Activated CD4-positive, alpha-beta T cell treated with anti-CD3 and anti-CD28 coated beads for 36 hours (primary cell): ENCODE measurements at regions of chr3 and their contacts with region 1.

Region 1: DNA sequence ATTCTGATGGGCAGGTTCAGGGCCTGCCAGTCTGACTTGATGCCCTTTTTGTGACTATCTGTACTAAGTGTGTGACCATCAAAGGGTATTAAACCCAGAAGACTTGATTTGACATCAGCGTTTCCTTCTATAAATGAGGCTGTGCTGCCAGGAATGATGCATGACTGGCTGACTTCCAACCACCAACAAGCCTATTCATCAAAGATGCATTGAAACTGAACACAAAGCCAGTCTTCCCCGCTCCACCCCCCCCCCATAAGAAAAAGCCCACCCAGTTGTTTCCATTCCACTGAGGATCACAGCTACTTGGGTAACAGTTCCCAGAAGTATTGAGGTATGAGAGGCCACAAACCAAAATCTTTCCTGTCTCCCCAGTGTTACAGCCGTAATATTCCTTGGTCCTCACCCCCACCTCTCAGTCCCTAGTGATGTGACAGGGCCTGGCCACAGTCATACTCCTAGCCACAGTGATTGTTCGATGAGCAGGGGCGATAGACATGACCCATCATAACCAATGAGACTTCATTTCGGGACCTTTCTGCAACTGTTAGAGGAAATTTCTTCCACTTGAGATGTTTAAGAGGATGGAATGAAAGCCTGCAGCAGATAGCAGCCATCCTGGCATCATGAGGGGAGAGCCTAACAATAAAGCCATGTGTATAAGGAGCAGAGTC is 22.6 kb downstream of the SH3BP5 start:
- DNase-seq: peak; percentile 72
- ATAC-seq: peak; percentile 51
- H3K4me3 Mint-ChIP-seq: peak overlapping the region; percentile 49
- H3K27ac Mint-ChIP-seq: peak overlapping the region; percentile 95
- H3K4me1 Mint-ChIP-seq: peaks cover 66% of the 10 kb centered on the region
- H3K27me3 Mint-ChIP-seq: no peaks in the 10 kb centered on the region

Region 2: DNA sequence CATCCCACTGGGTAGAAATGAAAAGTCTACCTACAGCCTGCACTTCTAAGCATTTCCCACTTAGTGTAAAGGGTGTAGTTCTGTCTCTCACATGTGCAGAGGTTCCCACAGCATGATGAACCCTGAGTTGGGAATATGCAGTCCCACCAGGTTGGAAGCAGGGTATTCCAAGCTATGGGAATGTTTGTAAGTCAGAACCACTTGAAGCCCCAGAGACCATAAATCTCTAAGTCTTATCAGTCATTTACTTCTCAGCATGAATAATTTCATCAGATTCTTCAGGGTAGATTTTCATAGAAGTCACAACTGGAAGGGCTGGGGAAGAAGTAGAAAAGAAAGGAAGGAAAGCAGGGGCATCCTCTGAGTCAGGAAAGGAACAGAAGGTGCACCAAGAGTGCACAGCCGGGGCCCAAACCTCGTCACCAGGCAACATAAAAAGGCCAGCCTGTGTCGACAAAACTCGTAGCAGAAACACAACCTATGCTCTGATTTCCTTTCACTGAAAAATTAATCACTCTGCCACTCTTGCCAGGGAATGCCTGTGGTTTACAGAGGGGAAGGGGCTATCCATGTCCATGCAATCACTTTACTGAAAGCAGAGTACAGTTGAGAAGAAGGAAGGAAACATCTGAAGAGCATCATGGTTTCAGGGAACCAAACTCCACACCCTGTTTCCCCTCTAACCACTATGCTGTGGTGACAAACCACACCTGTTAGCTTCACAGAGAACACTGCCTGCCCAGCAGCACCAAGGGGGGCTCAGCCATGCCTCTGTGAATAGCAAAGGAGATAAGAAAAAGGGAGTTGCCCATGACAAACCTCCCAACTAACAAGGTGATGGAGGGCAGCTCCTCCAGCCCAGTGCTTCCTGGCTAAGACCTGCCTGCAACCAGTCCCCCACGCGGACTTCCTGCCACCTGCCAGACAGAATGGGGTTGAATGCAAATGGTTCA is 17.9 kb before region 1 on chr3:
- CTCF ChIA-PET with region 1: interaction called, 10 read pairs
- POLR2A ChIA-PET with region 1: interaction called, 3 read pairs
- intact Hi-C with region 1: loop called (anchors 1 kb)
- DNase-seq: peak; percentile 77
- ATAC-seq: peak; percentile 82
- H3K4me3 Mint-ChIP-seq: no peak overlapping the region
- H3K27ac Mint-ChIP-seq: peak overlapping the region; percentile 70
- H3K4me1 Mint-ChIP-seq: peaks cover 68% of the 10 kb centered on the region
- H3K27me3 Mint-ChIP-seq: no peaks in the 10 kb centered on the region

Region 3: GRCh38 chr3:15299036-15299435 is 10.8 kb before region 1 on chr3:
- CTCF ChIA-PET with region 1: interaction called, 10 read pairs
- POLR2A ChIA-PET with region 1: interaction called, 8 read pairs
- intact Hi-C with region 1: loop called (anchors 1 kb)
- DNase-seq: peak; percentile 28
- ATAC-seq: peak; percentile 20
- H3K4me3 Mint-ChIP-seq: no peak overlapping the region
- H3K27ac Mint-ChIP-seq: peak overlapping the region; percentile 45
- H3K4me1 Mint-ChIP-seq: peaks cover 65% of the 10 kb centered on the region
- H3K27me3 Mint-ChIP-seq: no peaks in the 10 kb centered on the region

Region 4: GRCh38 chr3:15332405-15333098 is 22.8 kb after region 1 on chr3 and contains the start of gene SH3BP5:
- CTCF ChIA-PET with region 1: interaction called, 5 read pairs
- POLR2A ChIA-PET with region 1: interaction called, 4 read pairs
- intact Hi-C with region 1: loop called (anchors 1 kb)
- DNase-seq: peak; percentile 86
- ATAC-seq: peak; percentile 89
- H3K4me3 Mint-ChIP-seq: peak within 1 kb of the TSS; percentile 85
- H3K27ac Mint-ChIP-seq: peak within 1 kb of the TSS; percentile 83
- H3K4me1 Mint-ChIP-seq: peaks cover 53% of the 10 kb centered on the region
- H3K27me3 Mint-ChIP-seq: peaks cover 2% of the 10 kb centered on the region
- total RNA-seq, gene SH3BP5: 8.9 to 9.4 TPM

Region 5: GRCh38 chr3:15361494-15362212 is 51.9 kb after region 1 on chr3:
- CTCF ChIA-PET with region 1: interaction called, 7 read pairs
- POLR2A ChIA-PET with region 1: interaction called, 26 read pairs
- intact Hi-C with region 1: loop called (anchors 1 kb)
- DNase-seq: peak; percentile 83
- ATAC-seq: peak; percentile 76
- H3K4me3 Mint-ChIP-seq: peak overlapping the region; percentile 53
- H3K27ac Mint-ChIP-seq: peak overlapping the region; percentile 87
- H3K4me1 Mint-ChIP-seq: peaks cover 38% of the 10 kb centered on the region
- H3K27me3 Mint-ChIP-seq: peaks cover 2% of the 10 kb centered on the region

Region 6: DNA sequence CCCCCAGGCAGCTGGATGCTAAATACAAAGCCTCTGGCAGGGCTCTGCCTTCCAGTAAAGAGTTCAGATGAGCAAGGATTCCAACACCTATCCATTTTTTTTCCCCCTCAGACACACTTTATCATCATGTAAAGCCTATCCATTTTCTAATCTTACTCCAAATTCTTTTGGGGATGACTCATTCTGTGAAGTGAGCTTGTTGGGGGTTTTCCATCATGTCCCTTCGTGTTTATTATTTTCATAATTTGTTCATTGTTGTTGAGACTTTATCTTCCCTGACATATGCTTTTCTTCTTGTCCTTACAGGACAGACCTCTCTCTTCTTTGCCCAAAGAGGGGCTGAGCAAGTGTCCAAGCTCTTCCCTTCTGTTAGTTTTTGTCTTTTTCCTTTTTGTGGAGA is 57.3 kb after region 1 on chr3:
- CTCF ChIA-PET with region 1: interaction called, 7 read pairs
- POLR2A ChIA-PET with region 1: interaction called, 26 read pairs
- intact Hi-C with region 1: no loop called
- DNase-seq: no peak
- ATAC-seq: no peak
- H3K4me3 Mint-ChIP-seq: no peak overlapping the region
- H3K27ac Mint-ChIP-seq: no peak overlapping the region
- H3K4me1 Mint-ChIP-seq: peaks cover 19% of the 10 kb centered on the region
- H3K27me3 Mint-ChIP-seq: peaks cover 2% of the 10 kb centered on the region

Region 7: DNA sequence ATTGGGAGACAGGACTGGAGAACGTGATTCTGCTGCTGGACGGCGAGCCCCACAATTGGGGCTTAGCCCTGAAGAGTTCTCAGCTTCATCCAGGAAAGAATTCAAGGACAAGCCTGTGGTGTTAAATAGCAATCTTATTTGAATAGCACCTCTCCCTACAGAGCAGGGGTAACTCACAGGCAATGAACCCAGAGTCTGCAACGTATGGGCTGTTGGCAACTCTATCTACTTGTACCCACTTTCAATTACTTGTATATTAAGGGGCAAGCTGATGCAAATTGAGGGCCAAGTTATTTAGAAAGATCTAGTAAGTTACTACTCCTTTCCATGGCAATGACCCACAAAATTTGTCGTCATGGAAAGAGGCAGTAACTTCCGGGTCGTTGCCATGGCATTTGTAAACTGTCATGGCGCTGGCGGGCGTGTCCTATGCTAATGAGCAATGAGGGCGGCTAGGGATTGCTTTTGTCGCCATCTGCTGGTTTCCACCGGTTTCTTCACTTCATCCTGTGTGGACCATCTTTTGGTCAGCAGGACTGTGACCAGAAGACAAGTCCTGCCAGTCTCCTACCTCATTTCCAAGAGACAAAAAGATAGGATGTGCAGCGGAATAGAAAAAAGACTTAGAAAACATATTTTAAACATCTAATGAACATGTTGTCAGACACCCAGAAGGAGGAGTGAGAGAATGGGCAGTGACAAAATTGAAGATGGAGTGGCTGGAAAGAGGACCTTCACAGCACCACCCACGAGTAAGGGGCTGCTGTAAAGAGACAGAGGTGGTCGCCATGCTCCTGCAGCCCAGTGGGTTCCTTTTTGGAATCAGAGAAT is 68.4 kb after region 1 on chr3:
- CTCF ChIA-PET with region 1: interaction called, 4 read pairs
- POLR2A ChIA-PET with region 1: interaction called, 3 read pairs
- intact Hi-C with region 1: loop called (anchors 1 kb)
- DNase-seq: peak; percentile 96
- ATAC-seq: peak; percentile 96
- H3K4me3 Mint-ChIP-seq: no peak overlapping the region
- H3K27ac Mint-ChIP-seq: peak overlapping the region; percentile 73
- H3K4me1 Mint-ChIP-seq: peaks cover 6% of the 10 kb centered on the region
- H3K27me3 Mint-ChIP-seq: no peaks in the 10 kb centered on the region

Region 8: GRCh38 chr3:15601397-15602145 is 291.8 kb after region 1 on chr3 and contains the starts of genes BTD and HACL1:
- CTCF ChIA-PET with region 1: no interaction called
- POLR2A ChIA-PET with region 1: no interaction called
- intact Hi-C with region 1: no loop called
- DNase-seq: peak; percentile 99
- ATAC-seq: peak; percentile 94
- H3K4me3 Mint-ChIP-seq: peak within 1 kb of the TSS; percentile 100
- H3K27ac Mint-ChIP-seq: peak within 1 kb of the TSS; percentile 98
- H3K4me1 Mint-ChIP-seq: peaks cover 41% of the 10 kb centered on the region
- H3K27me3 Mint-ChIP-seq: no peaks in the 10 kb centered on the region
- total RNA-seq, gene BTD: 3.8 to 4.4 TPM
- total RNA-seq, gene HACL1: 22.3 to 23.2 TPM